Breast epithelium (tissue), 4 donors: ENCODE measurements at regions of chr11 and their contacts with region 1.

Region 1: GRCh38 chr11:92276773-92277172 is 52.2 kb downstream of the FAT3 start:
- DNase-seq: no peak
- H3K4me3 ChIP-seq: no peak overlapping the region
- H3K27ac ChIP-seq: no peak overlapping the region
- H3K4me1 ChIP-seq: no peaks in the 10 kb centered on the region
- H3K27me3 ChIP-seq: no peaks in the 10 kb centered on the region
- CTCF ChIP-seq: no peak
- POLR2A ChIP-seq: no peak

Region 2: DNA sequence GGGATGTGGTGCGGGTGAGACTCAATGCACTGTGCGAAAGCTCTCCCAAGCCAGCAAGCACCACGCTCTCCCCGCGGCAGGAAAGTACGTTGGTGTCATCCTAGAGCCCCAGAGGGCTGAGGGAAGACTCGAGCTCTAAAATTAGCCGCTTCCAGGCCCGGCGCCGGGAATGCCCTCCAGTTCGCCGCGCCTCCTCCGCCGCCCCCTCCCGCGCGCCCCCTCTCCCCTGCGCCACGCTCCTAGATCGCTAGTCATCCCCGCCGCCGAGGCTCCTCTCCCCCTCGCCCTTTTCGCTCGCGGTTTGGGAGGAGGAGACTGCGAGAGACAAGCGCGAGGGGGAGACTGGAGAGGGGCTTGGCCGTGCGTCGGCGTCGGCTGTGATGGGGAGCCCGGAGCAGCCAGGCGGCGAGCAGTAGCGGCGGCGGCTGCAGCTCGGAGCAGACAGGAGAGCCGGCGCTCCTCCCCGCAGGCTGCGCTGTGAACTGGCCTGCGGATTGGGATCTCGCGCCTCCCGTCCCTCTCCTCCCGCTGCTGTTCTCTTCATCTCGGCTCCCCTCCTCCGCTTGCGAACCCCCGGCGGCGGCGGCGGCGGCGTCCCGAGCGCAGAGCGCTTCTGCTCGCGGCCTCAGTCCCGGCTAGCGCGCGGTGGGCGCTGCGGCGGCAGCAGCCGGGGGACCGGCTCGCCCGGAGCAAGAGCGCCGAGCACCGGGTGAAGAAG is 52.2 kb before region 1 on chr11 and contains the start of gene FAT3:
- intact Hi-C with region 1: loop called (anchors 5 kb)
- DNase-seq: no peak
- H3K4me3 ChIP-seq: peak within 1 kb of the TSS; percentile 38 to 66 (median 47)
- H3K27ac ChIP-seq: no peak within 1 kb of the TSS
- H3K4me1 ChIP-seq: no peaks in the 10 kb centered on the region
- H3K27me3 ChIP-seq: peaks cover 0 to 50% of the 10 kb centered on the region in 2 donors
- CTCF ChIP-seq: no peak
- POLR2A ChIP-seq: no peak
- total RNA-seq, gene FAT3: 0.64 to 5.0 (median 0.66) TPM

Region 3: GRCh38 chr11:92357344-92357743 is 80.6 kb after region 1 on chr11:
- intact Hi-C with region 1: no loop called
- DNase-seq: no peak
- H3K4me3 ChIP-seq: no peak overlapping the region
- H3K27ac ChIP-seq: no peak overlapping the region
- H3K4me1 ChIP-seq: no peaks in the 10 kb centered on the region
- H3K27me3 ChIP-seq: no peaks in the 10 kb centered on the region
- CTCF ChIP-seq: no peak
- POLR2A ChIP-seq: no peak

Region 4: GRCh38 chr11:92511522-92512203 is 234.9 kb after region 1 on chr11:
- intact Hi-C with region 1: loop called (anchors 5 kb)
- DNase-seq: no peak
- H3K4me3 ChIP-seq: no peak overlapping the region
- H3K27ac ChIP-seq: no peak overlapping the region
- H3K4me1 ChIP-seq: no peaks in the 10 kb centered on the region
- H3K27me3 ChIP-seq: no peaks in the 10 kb centered on the region
- CTCF ChIP-seq: no peak
- POLR2A ChIP-seq: no peak